ENCODE measurements at regions of chr1 and their contacts with region 1.

Region 1: DNA sequence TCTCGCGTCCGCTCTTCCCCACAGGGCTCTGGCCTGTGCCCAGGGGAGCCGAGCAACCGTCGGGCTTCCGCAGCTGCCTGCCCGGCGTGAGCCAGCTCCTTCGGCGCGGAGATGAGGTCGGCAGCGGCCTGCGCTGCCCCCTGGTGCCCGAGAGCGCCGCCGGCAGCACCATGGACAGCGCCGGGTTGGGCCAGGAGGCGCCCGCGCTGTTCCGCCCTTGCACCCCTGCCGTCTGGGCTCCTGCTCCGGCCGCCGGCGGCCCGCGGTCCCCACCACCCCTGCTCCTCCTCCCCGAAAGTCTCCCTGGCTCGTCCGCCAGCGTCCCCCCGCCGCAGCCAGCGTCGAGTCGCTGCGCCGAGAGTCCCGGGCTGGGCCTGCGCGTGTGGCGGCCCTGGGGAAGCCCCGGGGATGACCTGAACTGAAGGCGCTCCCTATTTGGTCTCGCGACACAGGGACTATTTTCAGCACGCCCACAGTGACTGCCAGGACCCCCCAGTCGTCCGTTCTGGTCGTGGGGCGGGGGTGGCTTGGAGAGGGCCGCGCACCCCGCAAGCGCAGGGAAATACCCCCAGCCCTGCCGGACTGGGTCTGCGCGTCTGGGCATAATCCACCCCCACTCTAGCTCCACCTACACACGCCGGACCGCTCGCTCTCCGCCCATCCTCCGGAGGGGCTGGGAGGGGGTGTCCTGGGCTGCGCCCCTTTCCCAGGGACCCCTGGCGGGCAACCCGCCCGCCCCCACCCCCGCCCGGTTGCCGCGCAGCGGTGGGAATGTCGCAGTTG is 1.3 kb downstream of the HES3 start:
- DNase-seq: peak; percentile 87
- H3K4me3 Mint-ChIP-seq: no peak overlapping the region
- H3K27ac Mint-ChIP-seq: no peak overlapping the region
- H3K4me1 Mint-ChIP-seq: peaks cover 26% of the 10 kb centered on the region
- H3K27me3 Mint-ChIP-seq: peaks cover 92% of the 10 kb centered on the region

Region 2: DNA sequence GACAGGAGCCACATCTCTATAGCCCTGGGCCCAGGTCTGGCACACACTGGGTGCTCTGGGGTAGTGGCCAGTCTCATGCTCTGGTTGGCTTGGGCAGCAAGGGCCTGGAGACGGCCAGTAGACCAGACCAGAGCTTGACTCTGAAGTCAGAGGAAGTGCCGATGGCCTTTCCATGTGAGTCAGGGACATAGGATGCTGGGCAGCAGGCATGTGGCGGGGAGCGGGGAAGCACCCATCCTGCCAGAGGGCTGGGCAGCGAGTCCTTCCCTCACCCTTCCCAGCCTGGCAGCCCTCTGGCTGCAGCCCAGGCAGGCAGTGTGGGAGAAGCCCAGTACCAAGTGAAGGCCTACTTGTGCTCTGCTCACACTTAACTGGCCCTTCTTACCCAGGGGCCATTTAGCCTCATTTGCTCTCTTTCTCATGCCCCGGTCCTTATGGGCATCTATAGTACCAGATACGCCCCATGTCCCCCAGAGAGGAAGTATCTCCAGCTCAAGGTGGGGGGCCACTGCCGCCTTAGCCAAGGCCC is 12.3 kb after region 1 on chr1:
- CTCF ChIA-PET with region 1: interaction called, 11 read pairs
- DNase-seq: no peak
- H3K4me3 Mint-ChIP-seq: no peak overlapping the region
- H3K27ac Mint-ChIP-seq: no peak overlapping the region
- H3K4me1 Mint-ChIP-seq: peaks cover 10% of the 10 kb centered on the region
- H3K27me3 Mint-ChIP-seq: peaks cover 72% of the 10 kb centered on the region

Region 3: DNA sequence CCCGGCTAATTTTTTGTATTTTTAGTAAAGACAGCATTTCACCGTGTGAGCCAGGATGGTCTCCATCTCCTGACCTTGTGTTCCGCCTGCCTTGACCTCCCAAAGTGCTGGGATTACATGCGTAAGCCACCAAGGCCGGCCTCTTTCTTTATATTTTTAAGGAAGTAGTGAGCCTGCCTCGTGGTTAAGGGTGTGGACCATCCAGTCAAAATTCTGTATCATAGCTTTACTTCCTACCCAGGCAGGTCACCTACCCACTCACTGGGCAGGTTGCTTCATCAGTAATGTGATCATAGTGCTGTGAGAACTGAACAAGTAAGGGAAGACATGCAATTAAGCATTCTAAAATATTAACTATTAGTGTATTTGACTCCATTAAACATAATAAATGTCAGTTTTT is 156.4 kb after region 1 on chr1:
- CTCF ChIA-PET with region 1: interaction called, 27 read pairs
- DNase-seq: no peak
- H3K4me3 Mint-ChIP-seq: no peak overlapping the region
- H3K27ac Mint-ChIP-seq: no peak overlapping the region
- H3K4me1 Mint-ChIP-seq: peaks cover 13% of the 10 kb centered on the region
- H3K27me3 Mint-ChIP-seq: peaks cover 50% of the 10 kb centered on the region

Region 4: DNA sequence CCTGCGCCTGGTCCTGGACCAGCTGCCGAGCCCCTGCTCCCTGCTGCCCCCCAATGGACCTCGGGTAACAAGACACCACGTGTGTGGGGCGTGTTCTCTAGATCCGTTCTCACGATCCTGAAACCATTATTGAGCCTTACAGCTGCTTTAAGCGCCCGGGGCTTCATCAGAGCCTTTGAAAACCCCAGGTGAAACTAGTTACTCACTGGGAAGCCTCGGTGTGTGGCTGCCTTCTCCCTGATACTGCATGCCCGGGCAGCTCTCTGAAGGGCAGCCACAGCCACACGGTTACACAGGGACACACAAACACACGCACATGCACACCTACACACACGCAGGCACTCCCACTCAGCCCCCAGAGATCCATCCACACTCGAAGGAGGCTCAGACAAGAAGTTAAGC is 169.2 kb after region 1 on chr1:
- CTCF ChIA-PET with region 1: interaction called, 22 read pairs
- DNase-seq: peak; percentile 67
- H3K4me3 Mint-ChIP-seq: peak overlapping the region; percentile 21
- H3K27ac Mint-ChIP-seq: no peak overlapping the region
- H3K4me1 Mint-ChIP-seq: peaks cover 14% of the 10 kb centered on the region
- H3K27me3 Mint-ChIP-seq: peaks cover 91% of the 10 kb centered on the region

Region 5: DNA sequence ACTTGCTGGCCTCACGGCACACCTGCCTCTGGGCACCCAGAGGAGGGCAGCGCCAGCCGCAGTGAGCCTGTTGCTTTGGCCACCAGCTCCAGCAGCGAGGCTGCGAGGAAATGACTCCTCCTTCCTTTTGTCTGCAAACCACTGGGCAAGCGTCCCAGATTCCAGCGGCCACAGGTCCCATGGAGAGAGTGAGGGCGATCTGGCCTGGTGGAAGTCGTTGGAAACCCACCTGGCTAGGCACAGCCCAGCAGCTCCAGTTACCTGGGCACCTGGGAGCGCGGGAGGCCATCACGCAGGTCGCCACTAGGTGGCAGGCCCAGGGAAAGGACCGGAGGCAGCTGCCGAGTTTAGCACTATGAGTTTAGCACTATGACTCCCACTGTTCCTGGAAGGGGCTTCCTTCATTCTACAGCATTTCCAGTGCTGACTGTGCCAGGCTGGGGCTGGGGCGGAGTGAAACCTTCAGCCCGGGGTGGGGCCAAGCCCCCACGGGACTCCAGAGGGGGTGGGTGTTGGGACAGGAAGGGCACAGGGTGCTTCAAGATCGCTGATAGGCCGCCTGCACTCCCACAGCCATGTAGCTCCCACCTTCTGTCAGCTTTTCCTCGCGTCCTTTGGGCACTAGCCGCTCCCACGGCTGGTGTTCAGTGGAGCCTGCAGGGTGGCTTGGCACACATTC is 178.2 kb after region 1 on chr1:
- CTCF ChIA-PET with region 1: interaction called, 22 read pairs
- DNase-seq: peak; percentile 81
- H3K4me3 Mint-ChIP-seq: no peak overlapping the region
- H3K27ac Mint-ChIP-seq: no peak overlapping the region
- H3K4me1 Mint-ChIP-seq: peaks cover 24% of the 10 kb centered on the region
- H3K27me3 Mint-ChIP-seq: peaks cover 97% of the 10 kb centered on the region

Region 6: DNA sequence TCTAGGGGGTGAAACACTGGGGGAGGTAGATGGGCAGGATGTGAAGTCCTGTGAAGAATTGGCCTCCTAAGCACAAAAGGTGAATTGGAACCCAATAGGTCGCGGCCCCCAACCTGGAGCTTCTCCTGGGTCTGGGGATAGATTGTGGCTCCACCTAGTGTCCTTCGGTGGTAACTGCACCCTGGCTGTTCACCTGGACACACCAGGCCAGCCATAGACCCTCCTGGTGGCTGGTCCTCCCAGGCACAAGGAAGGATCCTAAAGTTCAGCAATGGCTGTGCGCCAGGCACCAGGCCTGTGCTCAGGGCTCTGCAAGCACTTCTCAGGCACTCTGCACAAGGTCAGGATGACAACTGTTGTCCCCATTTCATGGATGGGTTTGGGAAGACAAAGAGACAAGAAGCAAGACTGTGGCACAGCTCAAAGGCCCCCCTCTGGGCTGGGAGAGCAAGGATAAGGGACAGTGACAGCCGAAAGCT is 192.8 kb after region 1 on chr1:
- CTCF ChIA-PET with region 1: interaction called, 19 read pairs
- DNase-seq: peak; percentile 84
- H3K4me3 Mint-ChIP-seq: no peak overlapping the region
- H3K27ac Mint-ChIP-seq: no peak overlapping the region
- H3K4me1 Mint-ChIP-seq: peaks cover 8% of the 10 kb centered on the region
- H3K27me3 Mint-ChIP-seq: peaks cover 88% of the 10 kb centered on the region

Measured in activated naive CD4-positive, alpha-beta T cell treated with anti-CD3 and anti-CD28 coated beads, Interleukin-2, amount 10 ng/mL, durations not matched to agents 7 days and 5 days (primary cell).